Transverse colon (tissue), 4 donors: ENCODE measurements at regions of chr16 and their contacts with region 1.

Region 1: GRCh38 chr16:68328151-68328859 is 17.5 kb downstream of the PRMT7 start:
- DNase-seq: peak; percentile 80
- H3K4me3 ChIP-seq: no peak overlapping the region
- H3K27ac ChIP-seq: no peak overlapping the region
- H3K4me1 ChIP-seq: peaks cover 0 to 15% (median 5%) of the 10 kb centered on the region in 4 donors
- H3K27me3 ChIP-seq: no peaks in the 10 kb centered on the region
- CTCF ChIP-seq: peak; percentile 84 to 95 (median 94)
- EP300 ChIP-seq: no peak
- POLR2A ChIP-seq: no peak

Region 2: DNA sequence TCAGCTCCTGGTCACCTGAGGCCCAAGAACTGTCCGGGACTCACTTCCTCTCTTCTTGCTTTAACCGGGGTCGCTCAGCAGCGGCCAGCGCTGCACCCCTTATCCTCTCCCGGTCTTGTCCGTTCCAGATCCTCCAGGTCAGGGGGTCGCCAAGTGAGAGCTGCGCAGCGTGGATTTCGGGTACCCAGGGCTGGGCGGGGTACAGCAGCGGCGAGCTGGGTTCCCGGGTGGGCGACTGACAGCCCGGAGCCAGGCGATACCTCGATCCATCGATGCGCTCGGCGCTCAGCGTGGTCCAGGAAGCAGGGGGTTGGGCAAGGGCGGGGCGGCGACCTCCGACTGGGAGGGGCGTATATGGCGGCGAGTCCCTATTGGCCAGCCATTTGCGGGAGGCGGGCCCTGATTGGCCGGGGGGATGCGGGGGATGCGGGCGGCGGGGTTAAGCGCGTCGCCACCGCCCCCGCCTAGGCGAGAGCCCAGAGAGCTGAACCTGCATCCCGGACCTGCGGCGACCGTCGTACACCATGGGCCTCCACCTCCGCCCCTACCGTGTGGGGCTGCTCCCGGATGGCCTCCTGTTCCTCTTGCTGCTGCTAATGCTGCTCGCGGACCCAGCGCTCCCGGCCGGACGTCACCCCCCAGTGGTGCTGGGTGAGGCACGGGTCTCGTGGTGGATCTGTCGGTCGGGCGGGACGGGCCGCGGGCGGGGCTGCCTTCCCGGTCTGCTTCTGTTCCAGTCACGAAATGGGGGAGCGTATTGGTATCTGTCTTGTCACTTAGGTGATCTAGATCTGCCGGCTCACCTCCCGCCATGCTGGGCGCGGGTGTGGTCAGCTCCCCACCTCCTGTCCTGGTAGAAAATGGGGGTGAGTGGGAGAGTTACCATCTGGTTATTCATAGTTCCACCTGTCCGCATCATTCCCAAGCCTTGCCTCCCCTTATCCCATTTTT is 83.1 kb before region 1 on chr16 and contains the start of gene PLA2G15:
- in situ Hi-C with region 1: loop called in 1 of 4 experiments (anchors 10 kb)
- intact Hi-C with region 1: loop called (anchors 1 kb)
- DNase-seq: peak; percentile 98
- H3K4me3 ChIP-seq: peak within 1 kb of the TSS; percentile 67 to 84 (median 68)
- H3K27ac ChIP-seq: peak within 1 kb of the TSS; percentile 61 to 79 (median 76)
- H3K4me1 ChIP-seq: peaks cover 18 to 30% (median 21%) of the 10 kb centered on the region in 4 donors
- H3K27me3 ChIP-seq: no peaks in the 10 kb centered on the region
- CTCF ChIP-seq: no peak
- EP300 ChIP-seq: no peak
- POLR2A ChIP-seq: peak; percentile 64
- total RNA-seq, gene PLA2G15: 9.6 to 18.2 (median 15.0) TPM

Region 3: GRCh38 chr16:68257906-68258800 is 70.2 kb before region 1 on chr16:
- in situ Hi-C with region 1: loop called in 3 of 4 experiments (anchors 5 to 10 kb)
- intact Hi-C with region 1: no loop called
- DNase-seq: peak; percentile 66
- H3K4me3 ChIP-seq: no peak overlapping the region
- H3K27ac ChIP-seq: peak overlapping the region; percentile 84 to 88 (median 88)
- H3K4me1 ChIP-seq: peaks cover 9 to 30% (median 19%) of the 10 kb centered on the region in 4 donors
- H3K27me3 ChIP-seq: no peaks in the 10 kb centered on the region
- CTCF ChIP-seq: no peak
- EP300 ChIP-seq: peak; percentile 10
- POLR2A ChIP-seq: no peak

Region 4: GRCh38 chr16:68264128-68265077 is 63.9 kb before region 1 on chr16 and contains the start of gene SLC7A6:
- in situ Hi-C with region 1: loop called in 3 of 4 experiments (anchors 5 to 10 kb)
- intact Hi-C with region 1: loop called (anchors 1 kb)
- DNase-seq: peak; percentile 82
- H3K4me3 ChIP-seq: peak within 1 kb of the TSS; percentile 55 to 84 (median 74)
- H3K27ac ChIP-seq: peak within 1 kb of the TSS; percentile 94 to 98 (median 97)
- H3K4me1 ChIP-seq: peaks cover 13 to 55% (median 35%) of the 10 kb centered on the region in 4 donors
- H3K27me3 ChIP-seq: no peaks in the 10 kb centered on the region
- CTCF ChIP-seq: peak; percentile 71 to 86 (median 77)
- EP300 ChIP-seq: no peak
- POLR2A ChIP-seq: no peak
- total RNA-seq, gene SLC7A6: 20.6 to 145 (median 31.4) TPM

Region 5: DNA sequence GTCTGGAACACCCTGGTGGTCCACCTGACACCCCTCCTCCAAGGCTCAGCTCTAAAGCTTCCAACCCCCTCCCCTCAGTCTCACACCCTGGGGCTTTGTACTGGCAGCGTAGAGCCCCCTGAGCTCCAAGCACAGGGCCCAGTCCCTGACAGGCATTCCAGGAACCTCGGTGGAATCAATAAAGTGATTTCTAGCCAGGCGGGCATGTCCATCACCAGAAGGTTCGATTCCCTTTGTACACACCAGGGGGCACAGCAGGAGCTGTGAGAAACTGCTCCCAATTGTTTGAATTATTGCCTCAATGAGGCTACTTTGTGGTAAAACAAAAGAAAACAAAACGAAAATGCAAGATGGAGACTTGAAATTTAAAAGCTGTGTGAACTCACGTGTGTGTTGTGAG is 68.2 kb after region 1 on chr16:
- in situ Hi-C with region 1: no loop called
- intact Hi-C with region 1: no loop called
- DNase-seq: peak; percentile 69
- H3K4me3 ChIP-seq: no peak overlapping the region
- H3K27ac ChIP-seq: no peak overlapping the region
- H3K4me1 ChIP-seq: peaks cover 0 to 9% (median 4%) of the 10 kb centered on the region in 4 donors
- H3K27me3 ChIP-seq: no peaks in the 10 kb centered on the region
- CTCF ChIP-seq: peak; percentile 51 to 84 (median 67)
- EP300 ChIP-seq: no peak
- POLR2A ChIP-seq: no peak